Activated naive CD4-positive, alpha-beta T cell treated with anti-CD3 and anti-CD28 coated beads, Interleukin-2, amount 10 ng/mL, durations not matched to agents 7 days and 5 days (primary cell): ENCODE measurements at regions of chr5 and their contacts with region 1.

Region 1: GRCh38 chr5:119290161-119290569 is 65.7 kb upstream of the TNFAIP8 start:
- DNase-seq: no peak
- H3K4me3 Mint-ChIP-seq: peak overlapping the region; percentile 55
- H3K27ac Mint-ChIP-seq: peak overlapping the region; percentile 98
- H3K4me1 Mint-ChIP-seq: peaks cover 90% of the 10 kb centered on the region
- H3K27me3 Mint-ChIP-seq: no peaks in the 10 kb centered on the region

Region 2: GRCh38 chr5:119302916-119303897 is 13.0 kb after region 1 on chr5:
- CTCF ChIA-PET with region 1: interaction called, 11 read pairs
- DNase-seq: no peak
- H3K4me3 Mint-ChIP-seq: peak overlapping the region; percentile 3
- H3K27ac Mint-ChIP-seq: peak overlapping the region; percentile 85
- H3K4me1 Mint-ChIP-seq: peaks cover 94% of the 10 kb centered on the region
- H3K27me3 Mint-ChIP-seq: no peaks in the 10 kb centered on the region

Region 3: GRCh38 chr5:119501671-119502182 is 211.6 kb after region 1 on chr5:
- CTCF ChIA-PET with region 1: no interaction called
- DNase-seq: no peak
- H3K4me3 Mint-ChIP-seq: no peak overlapping the region
- H3K27ac Mint-ChIP-seq: no peak overlapping the region
- H3K4me1 Mint-ChIP-seq: no peaks in the 10 kb centered on the region
- H3K27me3 Mint-ChIP-seq: no peaks in the 10 kb centered on the region